CD8-positive, alpha-beta memory T cell (primary cell): ENCODE measurements at regions of chr13 and their contacts with region 1.

Region 1: GRCh38 chr13:54989418-54989817 is 1960.8 kb downstream of the OLFM4 start:
- DNase-seq: no peak
- H3K4me3 ChIP-seq: no peak overlapping the region
- H3K4me3 Mint-ChIP-seq: no peak overlapping the region
- H3K27ac ChIP-seq: no peak overlapping the region
- H3K27ac Mint-ChIP-seq: no peak overlapping the region
- H3K4me1 ChIP-seq: no peaks in the 10 kb centered on the region
- H3K4me1 Mint-ChIP-seq: no peaks in the 10 kb centered on the region
- H3K27me3 ChIP-seq: no peaks in the 10 kb centered on the region
- H3K27me3 Mint-ChIP-seq: no peaks in the 10 kb centered on the region

Region 2: DNA sequence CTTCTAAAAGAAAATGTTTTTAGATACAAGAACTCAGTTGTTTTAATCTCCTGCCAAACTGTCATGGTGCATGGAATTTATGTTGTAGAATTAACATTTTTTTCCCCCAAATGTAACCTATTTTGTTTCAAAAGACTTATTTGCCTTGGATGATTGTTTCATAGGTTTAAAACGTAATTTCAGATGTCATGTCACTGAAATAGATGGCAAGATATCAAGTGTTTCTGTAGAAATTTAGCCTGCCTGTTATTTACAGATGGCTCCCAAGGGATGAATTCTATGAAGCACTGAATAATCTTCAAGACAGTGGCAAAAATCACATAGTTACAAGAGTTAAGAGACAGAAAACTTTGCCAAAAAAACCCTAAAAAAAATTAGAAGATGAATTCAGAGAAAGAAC is 476.2 kb before region 1 on chr13:
- CTCF ChIA-PET with region 1: no interaction called
- POLR2A ChIA-PET with region 1: interaction called, 10 read pairs
- DNase-seq: no peak
- H3K4me3 ChIP-seq: no peak overlapping the region
- H3K4me3 Mint-ChIP-seq: no peak overlapping the region
- H3K27ac ChIP-seq: no peak overlapping the region
- H3K27ac Mint-ChIP-seq: no peak overlapping the region
- H3K4me1 ChIP-seq: no peaks in the 10 kb centered on the region
- H3K4me1 Mint-ChIP-seq: no peaks in the 10 kb centered on the region
- H3K27me3 ChIP-seq: no peaks in the 10 kb centered on the region
- H3K27me3 Mint-ChIP-seq: no peaks in the 10 kb centered on the region